Dendritic cell treated with granulocyte-macrophage colony-stimulating factor and Interleukin-4, amounts not matched to agents 40 ng/mL and 50 ng/mL, for 4 days (primary cell): ENCODE measurements at regions of chr3 and their contacts with region 1.

Region 1: DNA sequence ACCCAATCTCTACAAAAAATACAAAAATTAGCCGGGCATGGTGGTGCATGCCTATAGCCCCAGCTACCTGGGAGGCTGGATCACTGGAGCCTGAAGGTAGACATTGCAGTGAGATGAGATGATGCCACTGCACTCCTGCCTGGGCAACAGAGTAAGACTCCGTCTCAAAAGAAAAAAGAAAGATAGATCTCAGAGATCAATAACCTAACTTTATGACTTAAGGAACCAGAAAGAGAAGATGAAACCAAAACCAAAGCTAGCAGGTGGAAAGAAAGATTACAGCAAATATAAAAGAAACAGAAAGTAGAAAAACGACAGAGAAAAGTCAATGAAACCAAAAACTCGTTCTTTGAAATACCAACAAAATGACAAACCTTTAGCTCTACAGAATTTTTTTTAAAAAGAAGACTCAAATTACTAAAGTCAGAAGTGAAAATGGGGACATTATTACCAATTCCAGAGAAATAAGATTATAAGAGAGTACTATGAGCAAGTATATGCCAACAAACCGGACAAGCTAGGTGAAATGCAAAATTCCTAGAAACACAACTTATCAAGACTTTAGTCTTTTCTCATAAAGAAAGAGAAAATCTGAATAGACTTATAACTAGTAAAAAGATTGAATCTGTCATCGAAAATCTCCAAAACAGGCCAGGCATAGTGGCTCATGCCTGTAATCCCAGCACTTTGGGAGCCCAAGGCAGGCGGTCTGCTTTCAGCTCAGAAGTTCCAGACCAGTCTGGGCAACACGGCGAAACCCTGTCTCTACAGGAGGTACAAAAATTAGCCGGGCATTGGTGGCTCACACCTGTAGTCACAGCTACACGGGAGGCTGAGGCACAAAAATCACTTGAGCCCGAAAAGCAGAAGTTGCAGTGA is 35.0 kb downstream of the ACAP2 start:
- H3K4me3 Mint-ChIP-seq: no peak overlapping the region
- H3K27ac Mint-ChIP-seq: no peak overlapping the region
- H3K4me1 Mint-ChIP-seq: peaks cover 52% of the 10 kb centered on the region
- H3K27me3 Mint-ChIP-seq: no peaks in the 10 kb centered on the region

Region 2: DNA sequence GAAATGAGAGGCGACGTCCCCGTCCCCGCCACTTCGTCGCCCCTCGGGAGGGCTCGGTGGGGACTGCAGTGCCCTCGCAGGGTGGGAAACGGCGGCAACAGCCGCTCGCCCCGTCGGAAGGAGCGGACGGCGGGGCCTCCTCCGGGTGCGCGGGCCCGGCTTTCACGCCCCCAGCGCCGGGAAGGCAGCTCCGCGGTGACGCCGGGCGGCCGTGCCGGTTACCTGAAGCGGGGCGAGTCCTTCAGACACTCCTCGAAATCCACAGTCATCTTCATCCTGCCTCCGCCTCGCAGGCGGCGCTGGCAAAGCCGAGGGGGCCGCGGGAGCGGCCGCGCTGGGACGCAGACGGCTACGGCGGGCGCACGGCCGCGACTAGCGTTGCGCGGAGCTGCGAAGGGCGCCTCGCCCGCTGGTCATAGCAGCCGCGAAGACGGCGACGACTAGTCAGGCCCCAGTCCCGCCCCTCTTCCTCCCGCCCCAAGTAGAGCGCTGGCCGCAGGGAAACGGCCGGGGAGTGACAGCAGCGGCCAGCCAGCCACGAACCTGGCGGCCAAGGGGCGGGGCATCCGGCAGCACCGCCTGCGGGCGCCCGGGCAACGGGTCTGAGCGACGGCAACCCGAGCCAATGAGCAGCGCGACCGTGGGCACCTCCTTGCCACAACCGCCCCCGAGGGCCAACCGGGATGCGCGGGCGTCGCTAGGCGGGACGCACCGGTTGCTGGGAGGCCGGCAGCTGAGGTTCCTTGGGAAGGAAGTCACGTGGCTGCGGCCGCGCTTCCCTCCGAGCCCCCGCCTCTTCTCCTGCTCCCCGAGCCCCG is 35.0 kb after region 1 on chr3 and contains the start of gene ACAP2:
- intact Hi-C with region 1: loop called (anchors 5 kb)
- H3K4me3 Mint-ChIP-seq: peak within 1 kb of the TSS; percentile 97
- H3K27ac Mint-ChIP-seq: peak within 1 kb of the TSS; percentile 99
- H3K4me1 Mint-ChIP-seq: peaks cover 40% of the 10 kb centered on the region
- H3K27me3 Mint-ChIP-seq: no peaks in the 10 kb centered on the region

Region 3: GRCh38 chr3:195612075-195612800 is 204.5 kb after region 1 on chr3:
- intact Hi-C with region 1: no loop called
- H3K4me3 Mint-ChIP-seq: no peak overlapping the region
- H3K27ac Mint-ChIP-seq: no peak overlapping the region
- H3K4me1 Mint-ChIP-seq: peaks cover 6% of the 10 kb centered on the region
- H3K27me3 Mint-ChIP-seq: peaks cover 20% of the 10 kb centered on the region